Activated CD4-positive, alpha-beta T cell treated with anti-CD3 and anti-CD28 coated beads for 36 hours (primary cell): ENCODE measurements at regions of chr18 and their contacts with region 1.

Region 1: DNA sequence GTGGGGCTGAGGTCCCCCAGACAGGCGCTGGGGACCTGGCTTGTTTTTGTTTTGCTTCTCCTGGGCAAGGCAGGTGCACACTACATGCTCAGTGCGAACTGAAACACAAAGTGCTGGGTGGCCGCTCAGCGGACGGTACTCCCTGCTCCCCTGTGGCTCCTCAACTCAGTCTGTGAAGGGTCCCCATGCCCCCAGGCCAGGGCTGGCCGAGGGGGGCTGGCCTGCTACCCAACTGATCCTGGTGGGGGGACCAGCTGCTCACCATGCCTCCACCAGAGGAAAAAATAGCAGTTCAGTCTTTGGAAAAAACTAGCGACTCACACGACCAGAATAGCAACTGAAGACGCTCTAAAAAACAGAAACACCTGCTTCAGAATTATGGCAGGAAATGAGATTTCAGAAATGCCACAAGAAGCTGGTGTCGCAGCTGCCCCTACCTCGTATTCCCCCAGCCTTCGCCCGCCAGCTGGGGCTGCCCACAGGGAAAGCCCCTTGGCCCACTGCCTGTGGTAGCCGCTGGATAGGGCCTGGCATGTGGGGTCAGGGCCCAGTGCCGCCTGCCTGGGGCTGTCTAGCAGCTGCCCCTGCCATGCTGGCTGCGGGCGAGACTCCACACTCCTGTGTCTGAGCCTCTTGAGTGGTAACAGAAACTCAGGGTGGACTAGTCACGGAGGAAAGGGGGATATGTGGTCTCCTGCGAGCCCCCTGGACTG is 43.7 kb downstream of the MEX3C start:
- DNase-seq: peak; percentile 67
- ATAC-seq: peak; percentile 28
- H3K4me3 Mint-ChIP-seq: peak overlapping the region; percentile 64
- H3K27ac Mint-ChIP-seq: peak overlapping the region; percentile 98
- H3K4me1 Mint-ChIP-seq: peaks cover 52% of the 10 kb centered on the region
- H3K27me3 Mint-ChIP-seq: no peaks in the 10 kb centered on the region

Region 2: DNA sequence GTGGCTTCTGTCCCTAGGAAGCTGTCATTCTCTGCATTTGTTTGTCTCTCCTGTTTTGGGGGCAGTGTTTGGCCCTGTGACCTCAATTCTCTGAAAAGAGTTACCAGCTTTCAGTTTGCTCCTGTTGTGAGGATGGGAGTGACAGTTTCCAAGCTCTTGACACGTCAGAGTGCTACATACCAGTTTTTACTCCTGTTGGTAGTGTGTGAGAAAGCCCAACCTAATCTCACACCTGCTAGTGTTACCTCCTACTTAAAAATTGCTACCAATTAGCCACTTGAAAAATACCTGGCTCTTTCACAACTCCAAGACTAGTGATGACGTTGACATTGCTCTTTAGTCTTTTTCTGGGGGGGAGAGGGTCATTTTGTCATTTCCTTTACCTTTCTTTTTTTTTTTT is 764.8 kb before region 1 on chr18:
- CTCF ChIA-PET with region 1: no interaction called
- POLR2A ChIA-PET with region 1: no interaction called
- intact Hi-C with region 1: loop called in 1 of 2 experiments (anchors 5 kb)
- DNase-seq: no peak
- ATAC-seq: no peak
- H3K4me3 Mint-ChIP-seq: no peak overlapping the region
- H3K27ac Mint-ChIP-seq: no peak overlapping the region
- H3K4me1 Mint-ChIP-seq: no peaks in the 10 kb centered on the region
- H3K27me3 Mint-ChIP-seq: no peaks in the 10 kb centered on the region

Region 3: DNA sequence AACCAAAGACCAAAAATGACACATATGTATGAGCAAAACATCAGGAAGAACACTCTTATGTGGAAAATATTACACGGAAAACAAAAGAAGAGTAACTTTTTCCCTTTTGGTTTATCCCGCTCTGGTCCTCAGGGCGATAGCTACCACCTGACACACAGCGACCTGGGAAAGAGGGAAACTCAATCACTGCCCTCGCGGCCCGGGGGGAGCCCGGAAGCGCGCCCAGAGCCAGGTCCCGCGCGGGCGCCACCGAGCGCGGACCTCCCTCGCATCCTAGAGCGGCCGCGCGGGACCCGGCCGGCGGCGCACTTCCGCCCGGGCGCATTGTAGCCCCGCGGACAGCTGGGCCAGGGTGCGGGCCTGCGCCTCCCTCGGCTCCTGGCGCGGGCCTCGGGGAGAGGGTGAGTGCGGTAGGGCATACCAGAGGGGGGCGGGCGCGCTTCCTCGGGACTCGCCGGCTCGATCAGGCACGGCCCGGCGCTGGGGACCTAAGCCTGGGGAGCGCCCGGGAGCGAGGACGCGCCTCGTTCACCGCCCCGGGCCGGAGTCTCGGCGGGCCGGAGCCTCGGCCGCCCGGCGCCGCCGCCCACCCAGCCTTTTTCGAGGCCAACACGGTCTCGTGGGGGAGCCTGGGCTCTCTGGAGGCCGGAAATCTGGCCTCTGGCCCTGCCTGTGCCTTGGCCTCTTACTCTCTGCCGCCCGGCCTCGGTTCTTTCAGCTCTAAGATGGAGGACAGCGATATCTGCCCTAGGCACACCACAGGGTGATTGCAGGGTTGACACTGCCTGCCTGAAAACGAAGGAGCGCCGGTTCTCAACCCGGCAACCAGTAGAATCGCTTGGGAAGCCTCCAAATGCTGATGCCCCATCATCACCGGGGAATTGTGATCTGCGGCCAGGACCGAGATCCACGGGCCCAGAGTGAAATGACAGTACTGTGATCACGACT is 185.8 kb before region 1 on chr18 and contains the start of gene ELAC1:
- CTCF ChIA-PET with region 1: no interaction called
- POLR2A ChIA-PET with region 1: no interaction called
- intact Hi-C with region 1: loop called in 1 of 2 experiments (anchors 5 kb)
- DNase-seq: peak; percentile 76
- ATAC-seq: peak; percentile 91
- H3K4me3 Mint-ChIP-seq: peak within 1 kb of the TSS; percentile 76
- H3K27ac Mint-ChIP-seq: peak within 1 kb of the TSS; percentile 94
- H3K4me1 Mint-ChIP-seq: peaks cover 30% of the 10 kb centered on the region
- H3K27me3 Mint-ChIP-seq: no peaks in the 10 kb centered on the region
- total RNA-seq, gene ELAC1: 4.7 to 5.6 TPM

Region 4: GRCh38 chr18:51029694-51030536 is 123.9 kb before region 1 on chr18 and contains the start of gene SMAD4:
- CTCF ChIA-PET with region 1: no interaction called
- POLR2A ChIA-PET with region 1: no interaction called
- intact Hi-C with region 1: loop called in 1 of 2 experiments (anchors 5 kb)
- DNase-seq: peak; percentile 99
- ATAC-seq: peak; percentile 84
- H3K4me3 Mint-ChIP-seq: peak within 1 kb of the TSS; percentile 85
- H3K27ac Mint-ChIP-seq: peak within 1 kb of the TSS; percentile 94
- H3K4me1 Mint-ChIP-seq: peaks cover 55% of the 10 kb centered on the region
- H3K27me3 Mint-ChIP-seq: no peaks in the 10 kb centered on the region
- total RNA-seq, gene SMAD4: 79.3 to 89.5 TPM

Region 5: DNA sequence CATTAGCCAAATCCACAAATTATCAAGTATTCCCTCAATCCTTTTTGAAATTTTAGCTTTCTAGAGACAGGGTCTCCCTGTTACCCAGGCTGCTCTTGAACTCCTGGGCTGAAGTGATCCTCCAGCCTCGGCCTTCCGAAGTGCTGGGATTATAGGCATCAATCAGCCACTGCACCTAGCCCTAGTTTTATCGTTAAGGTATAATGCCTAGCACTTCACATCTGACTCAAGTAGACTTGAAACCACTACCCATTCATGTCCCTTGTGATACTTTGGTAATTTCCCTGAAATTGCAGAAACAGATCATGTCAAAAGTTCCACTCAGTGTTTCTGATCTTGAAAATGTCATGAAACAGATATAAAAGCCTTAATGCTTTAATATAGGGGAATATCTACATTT is 17.4 kb after region 1 on chr18:
- CTCF ChIA-PET with region 1: interaction called, 5 read pairs
- POLR2A ChIA-PET with region 1: interaction called, 6 read pairs
- intact Hi-C with region 1: loop called (anchors 1 kb)
- DNase-seq: no peak
- ATAC-seq: peak; percentile 83
- H3K4me3 Mint-ChIP-seq: peak overlapping the region; percentile 64
- H3K27ac Mint-ChIP-seq: peak overlapping the region; percentile 92
- H3K4me1 Mint-ChIP-seq: peaks cover 62% of the 10 kb centered on the region
- H3K27me3 Mint-ChIP-seq: no peaks in the 10 kb centered on the region

Region 6: DNA sequence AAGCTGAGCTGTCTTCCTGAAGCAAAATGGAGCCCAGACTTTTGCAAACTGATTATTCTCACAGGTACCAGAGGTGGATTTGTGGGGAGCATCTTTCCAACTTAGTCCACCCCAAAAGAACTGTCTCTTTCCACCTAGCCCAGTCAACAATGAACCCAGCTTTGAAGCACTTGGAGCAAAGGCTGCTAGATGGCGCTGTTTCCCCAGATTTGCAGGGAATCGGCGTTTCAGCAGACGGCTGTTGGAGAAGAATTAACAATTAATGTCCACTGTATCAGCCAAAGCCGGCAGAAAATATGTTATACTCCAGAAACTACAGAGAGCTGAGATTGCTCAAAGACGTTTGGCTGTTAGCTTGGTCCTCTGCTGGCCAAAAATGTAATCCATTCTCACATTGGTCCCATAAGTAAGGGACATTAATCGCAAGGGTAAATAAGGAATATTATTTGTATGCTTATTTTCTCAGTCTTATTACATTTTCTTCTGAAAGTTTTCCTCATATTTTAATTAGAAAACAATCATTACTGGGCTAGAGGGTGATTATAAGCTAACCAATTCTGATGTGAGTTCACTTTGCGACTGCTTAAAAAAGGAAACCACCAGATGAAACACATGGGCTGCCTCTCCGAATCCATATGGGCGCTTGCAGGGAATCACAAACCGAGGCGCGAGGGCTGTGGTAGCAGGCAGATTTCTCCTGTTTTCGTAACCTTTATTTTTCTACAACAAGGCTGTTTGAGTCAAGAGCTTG is 467.5 kb after region 1 on chr18:
- CTCF ChIA-PET with region 1: no interaction called
- POLR2A ChIA-PET with region 1: no interaction called
- intact Hi-C with region 1: no loop called
- DNase-seq: peak; percentile 65
- ATAC-seq: no peak
- H3K4me3 Mint-ChIP-seq: no peak overlapping the region
- H3K27ac Mint-ChIP-seq: no peak overlapping the region
- H3K4me1 Mint-ChIP-seq: no peaks in the 10 kb centered on the region
- H3K27me3 Mint-ChIP-seq: peaks cover 21% of the 10 kb centered on the region